HEK293 (cell line): ENCODE measurements at regions of chr10 and their contacts with region 1.

Region 1: GRCh38 chr10:102072673-102073527 is 7.8 kb downstream of the HPS6 start:
- H3K4me3 ChIP-seq: no peak overlapping the region
- H3K27ac ChIP-seq: no peak overlapping the region
- H3K4me1 ChIP-seq: peaks cover 6% of the 10 kb centered on the region
- CTCF ChIP-seq: peak; percentile 85

Region 2: GRCh38 chr10:101848894-101849351 is 224.0 kb before region 1 on chr10:
- CTCF ChIA-PET with region 1: interaction called, 25 read pairs
- POLR2A ChIA-PET with region 1: no interaction called
- H3K4me3 ChIP-seq: no peak overlapping the region
- H3K27ac ChIP-seq: no peak overlapping the region
- H3K4me1 ChIP-seq: no peaks in the 10 kb centered on the region
- CTCF ChIP-seq: no peak

Region 3: GRCh38 chr10:101889256-101890210 is 183.4 kb before region 1 on chr10:
- CTCF ChIA-PET with region 1: interaction called, 28 read pairs
- POLR2A ChIA-PET with region 1: no interaction called
- H3K4me3 ChIP-seq: no peak overlapping the region
- H3K27ac ChIP-seq: no peak overlapping the region
- H3K4me1 ChIP-seq: peaks cover 9% of the 10 kb centered on the region; the same call in 1 of the 2 replicates
- CTCF ChIP-seq: peak; percentile 56; the same call in 1 of the 2 replicates

Region 4: DNA sequence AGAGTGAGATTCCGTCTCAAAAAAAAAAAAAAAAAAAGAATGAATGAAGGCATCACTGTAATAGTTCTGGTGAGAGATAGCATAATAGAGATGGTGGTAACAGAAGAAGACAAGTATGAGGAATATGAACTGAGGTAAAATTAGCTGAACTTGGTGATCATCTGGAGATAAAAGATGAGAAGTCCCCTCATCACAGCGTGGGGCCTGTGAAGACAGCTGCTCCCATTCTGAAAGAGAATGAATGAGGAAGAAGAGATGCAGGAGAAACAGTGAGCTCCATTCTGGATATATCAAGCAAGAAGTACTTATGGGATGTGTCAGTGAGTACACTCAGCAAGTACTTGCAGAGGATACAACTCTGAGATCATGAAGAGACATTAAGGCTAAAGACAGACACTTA is 45.6 kb before region 1 on chr10:
- CTCF ChIA-PET with region 1: interaction called, 11 read pairs
- POLR2A ChIA-PET with region 1: interaction called, 3 read pairs
- H3K4me3 ChIP-seq: no peak overlapping the region
- H3K27ac ChIP-seq: no peak overlapping the region
- H3K4me1 ChIP-seq: no peaks in the 10 kb centered on the region
- CTCF ChIP-seq: no peak

Region 5: DNA sequence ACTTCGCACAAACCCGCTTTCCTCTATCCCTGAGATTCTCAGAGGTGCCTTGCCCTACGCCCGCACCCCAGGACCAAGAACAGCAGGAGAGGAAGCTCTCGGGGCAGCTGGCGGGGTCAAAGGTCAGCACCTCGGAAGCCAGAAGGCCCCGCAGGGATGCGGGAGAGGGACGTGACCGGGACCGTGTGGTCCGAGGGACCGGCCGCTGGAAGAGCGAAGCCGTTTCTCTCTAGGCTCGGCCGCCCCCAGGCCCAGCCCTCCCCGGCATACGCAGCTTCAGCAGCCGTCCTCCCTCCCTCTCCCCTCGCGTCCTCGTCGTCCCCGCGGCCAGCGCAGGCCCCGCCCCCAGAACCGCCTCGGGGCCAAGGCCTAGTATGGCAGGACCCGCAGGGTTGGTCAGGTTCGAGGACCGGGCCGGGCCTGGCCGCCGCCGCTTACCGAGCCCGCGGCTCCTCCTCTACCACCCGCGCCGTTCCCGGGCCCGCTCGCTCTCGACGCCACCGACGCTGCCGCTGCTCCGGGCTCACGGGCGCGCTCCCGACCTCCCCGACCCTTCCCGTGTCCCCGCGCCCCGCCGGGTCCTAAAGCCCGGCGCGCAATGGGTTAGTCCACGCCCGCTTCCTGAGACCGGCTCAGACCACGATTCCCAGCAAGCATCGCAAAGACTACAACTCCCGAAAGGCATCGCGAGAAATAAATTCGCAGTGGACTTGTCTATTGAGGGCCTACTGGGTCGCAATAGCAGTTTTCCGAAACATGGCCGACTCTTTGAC is 17.1 kb before region 1 on chr10 and contains the start of gene ARMH3:
- CTCF ChIA-PET with region 1: interaction called, 14 read pairs
- POLR2A ChIA-PET with region 1: interaction called, 8 read pairs
- H3K4me3 ChIP-seq: peak within 1 kb of the TSS; percentile 64
- H3K27ac ChIP-seq: peak within 1 kb of the TSS; percentile 81
- H3K4me1 ChIP-seq: peaks cover 10% of the 10 kb centered on the region
- CTCF ChIP-seq: peak; percentile 14; the same call in 1 of the 2 replicates

Region 6: GRCh38 chr10:102085336-102085735 is 12.4 kb after region 1 on chr10:
- CTCF ChIA-PET with region 1: interaction called, 39 read pairs
- POLR2A ChIA-PET with region 1: interaction called, 6 read pairs
- H3K4me3 ChIP-seq: no peak overlapping the region
- H3K27ac ChIP-seq: no peak overlapping the region
- H3K4me1 ChIP-seq: 0 out of 2 replicates have a peak, but pooled peaks cover 2% of the 10 kb centered on the region
- CTCF ChIP-seq: no peak

Region 7: DNA sequence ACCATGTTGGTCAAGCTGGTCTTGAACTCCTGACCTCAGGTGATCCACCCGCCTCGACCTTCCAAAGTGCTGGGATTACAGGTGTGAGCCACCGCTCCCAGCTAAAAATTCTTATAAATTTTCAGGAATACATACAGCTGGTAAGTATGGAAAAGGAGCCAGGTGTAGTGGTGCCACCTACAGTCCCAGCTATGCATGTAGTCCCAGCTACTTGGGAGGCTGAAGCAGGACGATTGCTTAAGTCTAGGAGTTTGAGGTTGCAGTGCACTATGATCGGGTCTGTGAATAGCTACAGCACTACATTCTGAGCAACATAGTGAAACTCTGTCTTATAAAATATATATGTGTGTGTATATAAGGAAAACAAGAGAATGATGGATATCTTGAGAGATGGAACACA is 28.3 kb after region 1 on chr10:
- CTCF ChIA-PET with region 1: interaction called, 17 read pairs
- POLR2A ChIA-PET with region 1: no interaction called
- H3K4me3 ChIP-seq: no peak overlapping the region
- H3K27ac ChIP-seq: no peak overlapping the region
- H3K4me1 ChIP-seq: no peaks in the 10 kb centered on the region
- CTCF ChIP-seq: peak; percentile 32; the same call in 1 of the 2 replicates